Right lobe of liver (tissue), 6 donors: ENCODE measurements at regions of chr16 and their contacts with region 1.

Region 1: GRCh38 chr16:2911580-2912329 is at the start of gene FLYWCH1:
- DNase-seq: peak; percentile 98 to 99 (median 99)
- ATAC-seq: peak; percentile 98 to 99 (median 98)
- H3K4me3 ChIP-seq: peak within 1 kb of the TSS; percentile 69 to 86 (median 79)
- H3K27ac ChIP-seq: peak within 1 kb of the TSS; percentile 53 to 83 (median 77)
- H3K4me1 ChIP-seq: peaks cover 0 to 6% (median 0%) of the 10 kb centered on the region in 4 donors
- H3K27me3 ChIP-seq: no peaks in the 10 kb centered on the region
- CTCF ChIP-seq: no peak
- POLR2A ChIP-seq: peak; percentile 62
- total RNA-seq, gene FLYWCH1: 9.3 to 19.8 (median 15.1) TPM

Region 2: DNA sequence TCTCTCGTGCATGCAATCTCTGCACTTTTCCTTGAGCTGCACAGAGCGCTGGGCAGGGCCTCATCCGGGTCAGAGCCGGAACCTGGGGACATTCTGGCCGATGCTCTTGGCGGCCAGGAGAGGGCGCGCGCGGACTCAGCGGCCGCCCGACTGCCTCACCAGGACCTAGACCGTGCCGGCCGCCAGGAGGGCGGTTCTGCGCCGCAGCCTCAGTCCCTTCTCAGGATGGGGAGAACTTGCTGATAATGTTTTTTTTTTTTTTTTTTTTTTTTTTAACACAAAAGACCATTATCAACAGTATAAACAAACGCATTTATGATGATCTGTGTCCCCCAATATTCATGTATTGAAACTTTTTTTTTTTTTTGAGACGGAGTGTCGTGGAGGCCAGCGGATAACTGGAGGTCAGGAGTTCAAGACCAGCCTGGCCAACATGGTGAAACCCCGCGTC is 36.8 kb before region 1 on chr16:
- intact Hi-C with region 1: loop called in 1 of 2 experiments (anchors 5 kb)
- DNase-seq: peak; percentile 78 to 84 (median 82)
- ATAC-seq: peak; percentile 100
- H3K4me3 ChIP-seq: no peak overlapping the region
- H3K27ac ChIP-seq: no peak overlapping the region
- H3K4me1 ChIP-seq: peaks cover 0 to 1% (median 0%) of the 10 kb centered on the region in 4 donors
- H3K27me3 ChIP-seq: no peaks in the 10 kb centered on the region
- CTCF ChIP-seq: peak; percentile 89 to 95 (median 93)
- POLR2A ChIP-seq: no peak

Region 3: GRCh38 chr16:3134564-3135417 is 223.0 kb after region 1 on chr16 and contains the start of gene ZNF213:
- intact Hi-C with region 1: no loop called
- DNase-seq: peak; percentile 94 to 97 (median 96)
- ATAC-seq: peak; percentile 92 to 96 (median 94)
- H3K4me3 ChIP-seq: peak within 1 kb of the TSS; percentile 86 to 95 (median 88)
- H3K27ac ChIP-seq: peak within 1 kb of the TSS; percentile 83 to 88 (median 85)
- H3K4me1 ChIP-seq: peaks cover 0 to 32% (median 6%) of the 10 kb centered on the region in 4 donors
- H3K27me3 ChIP-seq: no peaks in the 10 kb centered on the region
- CTCF ChIP-seq: no peak
- POLR2A ChIP-seq: peak; percentile 76
- total RNA-seq, gene ZNF213: 1.3 to 4.4 (median 1.7) TPM